ENCODE measurements at regions of chr19 and their contacts with region 1.

Region 1: GRCh38 chr19:54159352-54160181 is at the start of gene LENG1:
- DNase-seq: peak; percentile 100
- ATAC-seq: peak; percentile 77 to 90
- H3K4me3 ChIP-seq: peak within 1 kb of the TSS; percentile 56
- H3K27ac ChIP-seq: peak within 1 kb of the TSS; percentile 93 to 95
- H3K4me1 ChIP-seq: peaks cover 31% of the 10 kb centered on the region
- CTCF ChIP-seq: no peak
- EP300 ChIP-seq: no peak
- POLR2A ChIP-seq: peak; percentile 82
- RAD21 ChIP-seq: no peak
- polyA plus RNA-seq, gene LENG1: 6.8 and 13.3 TPM in 2 replicates

Region 2: DNA sequence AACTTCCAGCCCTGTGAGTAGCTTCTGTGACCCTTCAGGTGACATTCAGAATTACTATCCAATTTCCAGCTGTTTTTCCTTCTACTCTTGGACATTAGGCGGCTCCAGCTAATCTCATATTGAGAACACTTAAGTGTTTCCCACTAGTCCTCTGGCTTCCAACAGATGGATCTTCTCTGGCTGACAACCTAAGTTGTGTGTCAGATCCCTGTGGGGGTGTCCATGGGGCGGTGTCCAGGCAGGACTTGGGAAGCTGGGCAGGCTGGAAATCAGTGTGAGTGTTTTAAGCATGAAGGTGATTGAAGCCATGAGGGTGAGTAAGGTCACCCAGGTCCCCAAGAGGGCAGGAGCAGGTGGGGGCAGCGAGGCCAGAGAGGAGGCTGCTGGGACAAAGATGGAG is 11.9 kb before region 1 on chr19:
- CTCF ChIA-PET with region 1: interaction called, 24 read pairs
- POLR2A ChIA-PET with region 1: interaction called, 16 read pairs
- DNase-seq: no peak
- ATAC-seq: peak; percentile 13 to 23; a peak in 3 of 6 replicates
- H3K4me3 ChIP-seq: no peak overlapping the region
- H3K27ac ChIP-seq: no peak overlapping the region
- H3K4me1 ChIP-seq: no peaks in the 10 kb centered on the region
- CTCF ChIP-seq: no peak
- EP300 ChIP-seq: no peak
- POLR2A ChIP-seq: no peak
- RAD21 ChIP-seq: no peak

Region 3: GRCh38 chr19:54203151-54203611 is 43.6 kb after region 1 on chr19:
- CTCF ChIA-PET with region 1: no interaction called
- POLR2A ChIA-PET with region 1: interaction called, 14 read pairs
- DNase-seq: peak in 1 of 2 experiments; percentile 49
- ATAC-seq: no peak
- H3K4me3 ChIP-seq: peak overlapping the region; percentile 95
- H3K27ac ChIP-seq: peak overlapping the region; percentile 92 to 97
- H3K4me1 ChIP-seq: peaks cover 67% of the 10 kb centered on the region
- CTCF ChIP-seq: no peak
- EP300 ChIP-seq: no peak
- POLR2A ChIP-seq: no peak
- RAD21 ChIP-seq: no peak

Measured in A549 (cell line).